Activated CD4-positive, alpha-beta T cell treated with anti-CD3 and anti-CD28 coated beads, Interleukin-2, amount 10 ng/mL, durations not matched to agents 24 days and 14 days (primary cell): ENCODE measurements at regions of chr10 and their contacts with region 1.

Region 1: DNA sequence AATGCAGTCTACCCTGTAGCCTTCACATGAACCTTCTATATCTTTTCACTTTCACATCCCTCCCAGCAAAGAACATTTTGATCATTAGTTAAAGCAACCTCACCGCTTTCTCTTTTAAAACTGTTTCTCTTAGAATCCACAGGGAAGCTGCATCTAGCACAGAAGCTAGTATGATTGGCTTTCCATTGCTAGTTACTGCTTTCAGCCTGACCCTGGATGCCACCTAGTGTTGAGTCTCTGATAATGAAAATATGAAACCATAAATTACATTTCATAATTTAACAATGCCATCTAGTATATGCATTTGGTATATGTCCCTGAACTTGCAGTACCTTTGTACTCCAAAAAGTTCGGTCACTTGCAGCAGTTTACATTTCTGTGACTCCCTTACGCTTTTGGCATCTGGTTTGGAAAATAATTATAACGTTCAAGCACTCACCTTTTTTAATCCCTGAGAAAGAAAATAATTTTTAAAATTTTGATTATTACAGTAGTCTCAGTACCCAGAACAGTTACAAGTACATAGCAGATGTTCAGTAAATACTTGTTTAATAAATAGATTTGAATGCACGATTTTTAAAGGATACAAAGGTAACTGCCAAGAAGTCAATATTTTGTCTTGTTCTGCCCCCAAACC is 22.7 kb downstream of the CISD1 start:
- DNase-seq: peak; percentile 79
- H3K4me3 Mint-ChIP-seq: no peak overlapping the region
- H3K27ac Mint-ChIP-seq: no peak overlapping the region
- H3K4me1 Mint-ChIP-seq: peaks cover 2% of the 10 kb centered on the region
- H3K27me3 Mint-ChIP-seq: no peaks in the 10 kb centered on the region

Region 2: GRCh38 chr10:58177362-58177947 is 114.2 kb before region 1 on chr10:
- intact Hi-C with region 1: loop called (anchors 1 kb)
- DNase-seq: no peak
- H3K4me3 Mint-ChIP-seq: no peak overlapping the region
- H3K27ac Mint-ChIP-seq: no peak overlapping the region
- H3K4me1 Mint-ChIP-seq: no peaks in the 10 kb centered on the region
- H3K27me3 Mint-ChIP-seq: peaks cover 3% of the 10 kb centered on the region